Activated B cell treated with CpG ODN at 0.5 μM for 24 hours (primary cell): ENCODE measurements at regions of chr15 and their contacts with region 1.

Region 1: GRCh38 chr15:83734487-83734886 is 80.6 kb downstream of the ADAMTSL3 start:
- DNase-seq: no peak
- ATAC-seq: no peak
- H3K4me3 Mint-ChIP-seq: no peak overlapping the region
- H3K27ac Mint-ChIP-seq: no peak overlapping the region
- H3K4me1 Mint-ChIP-seq: no peaks in the 10 kb centered on the region
- H3K27me3 Mint-ChIP-seq: peaks cover 2% of the 10 kb centered on the region
- CTCF ChIP-seq: no peak

Region 2: DNA sequence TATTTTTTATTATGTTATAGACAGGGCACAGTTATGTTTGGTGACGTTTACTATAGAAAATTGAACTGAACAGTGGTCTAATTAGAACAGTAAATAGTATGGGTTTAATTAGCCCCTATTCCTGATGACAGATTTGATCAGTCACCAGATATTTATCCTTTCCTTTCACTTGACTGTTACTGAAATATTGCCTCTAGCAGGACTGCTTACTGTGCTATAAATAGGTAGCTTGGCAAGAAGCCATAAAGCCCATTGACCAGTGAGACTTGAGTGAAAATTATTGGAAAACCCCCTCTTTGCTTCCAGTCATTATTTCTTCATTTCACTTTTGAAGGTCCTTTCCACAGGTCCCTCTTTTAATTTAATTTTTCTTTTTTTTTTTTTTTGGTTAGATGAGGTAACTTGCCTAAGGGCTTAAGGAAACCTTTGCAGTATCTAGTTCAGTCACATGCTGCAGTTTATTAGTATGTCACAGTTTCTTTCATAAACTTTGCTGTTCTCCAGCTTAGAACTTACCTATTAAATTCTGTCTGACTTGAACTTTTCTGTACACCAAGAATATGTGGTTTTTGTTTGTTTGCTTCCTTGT is 35.0 kb after region 1 on chr15:
- CTCF ChIA-PET with region 1: no interaction called
- POLR2A ChIA-PET with region 1: no interaction called
- intact Hi-C with region 1: no loop called
- DNase-seq: no peak
- ATAC-seq: no peak
- H3K4me3 Mint-ChIP-seq: no peak overlapping the region
- H3K27ac Mint-ChIP-seq: no peak overlapping the region
- H3K4me1 Mint-ChIP-seq: no peaks in the 10 kb centered on the region
- H3K27me3 Mint-ChIP-seq: peaks cover 1% of the 10 kb centered on the region
- CTCF ChIP-seq: no peak

Region 3: DNA sequence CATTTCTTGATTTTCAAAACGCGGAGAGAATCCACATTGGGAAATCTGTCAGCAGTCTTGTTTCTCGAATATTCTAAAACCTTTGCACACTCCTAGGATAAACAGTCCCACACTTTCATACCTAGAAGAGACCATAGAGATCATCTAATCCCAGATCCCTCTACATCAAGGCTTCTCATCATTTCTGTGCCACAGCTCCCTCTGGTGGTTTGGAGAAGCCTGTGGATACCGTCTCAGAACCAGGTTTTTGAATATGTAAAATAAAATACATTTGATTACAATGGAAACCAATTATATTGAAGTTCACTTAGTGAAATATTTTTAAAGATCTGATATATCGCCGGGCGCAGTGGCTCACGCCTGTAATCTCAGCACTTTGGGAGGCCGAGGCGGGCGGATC is 289.1 kb after region 1 on chr15:
- CTCF ChIA-PET with region 1: no interaction called
- POLR2A ChIA-PET with region 1: no interaction called
- intact Hi-C with region 1: loop called (anchors 10 kb)
- DNase-seq: no peak
- ATAC-seq: no peak
- H3K4me3 Mint-ChIP-seq: no peak overlapping the region
- H3K27ac Mint-ChIP-seq: no peak overlapping the region
- H3K4me1 Mint-ChIP-seq: no peaks in the 10 kb centered on the region
- H3K27me3 Mint-ChIP-seq: no peaks in the 10 kb centered on the region
- CTCF ChIP-seq: no peak